Right cardiac atrium (tissue), 5 donors: ENCODE measurements at regions of chr4 and their contacts with region 1.

Region 1: DNA sequence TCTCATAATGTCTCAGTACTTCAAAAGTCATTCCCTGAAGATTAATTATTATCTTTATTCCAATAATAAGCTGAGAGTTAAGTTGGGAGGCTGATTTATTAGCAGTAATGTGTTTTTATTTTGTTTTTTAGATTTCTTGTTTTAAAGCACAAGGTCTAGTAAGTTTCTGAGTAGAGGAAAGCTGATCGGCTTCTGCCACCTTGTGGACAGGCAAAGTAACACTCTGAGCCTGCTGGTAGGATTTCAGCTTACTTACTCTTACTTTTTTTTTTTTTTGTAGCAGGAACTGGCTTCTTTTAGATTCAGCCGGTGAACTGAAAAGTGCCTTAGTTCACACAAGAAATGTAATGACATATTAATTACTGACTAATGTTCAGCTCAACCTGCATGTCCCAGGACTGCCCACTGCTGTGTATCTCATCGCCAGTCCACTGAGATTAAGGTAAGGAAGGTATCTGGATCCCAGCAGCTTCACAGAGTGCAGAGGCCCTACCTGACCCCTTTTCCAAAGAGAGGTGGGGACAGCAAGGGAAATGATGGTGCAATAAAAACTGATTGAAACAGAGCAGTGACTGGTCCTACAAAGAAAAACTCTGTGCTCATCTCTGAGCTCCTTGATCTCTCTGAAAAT is 126.5 kb downstream of the ADGRA3 start:
- DNase-seq: peak; percentile 25 to 64 (median 44)
- ATAC-seq: peak; percentile 33 to 55
- H3K4me3 ChIP-seq: no peak overlapping the region
- H3K27ac ChIP-seq: no peak overlapping the region
- H3K4me1 ChIP-seq: peaks cover 3% of the 10 kb centered on the region
- H3K27me3 ChIP-seq: no peaks in the 10 kb centered on the region

Region 2: DNA sequence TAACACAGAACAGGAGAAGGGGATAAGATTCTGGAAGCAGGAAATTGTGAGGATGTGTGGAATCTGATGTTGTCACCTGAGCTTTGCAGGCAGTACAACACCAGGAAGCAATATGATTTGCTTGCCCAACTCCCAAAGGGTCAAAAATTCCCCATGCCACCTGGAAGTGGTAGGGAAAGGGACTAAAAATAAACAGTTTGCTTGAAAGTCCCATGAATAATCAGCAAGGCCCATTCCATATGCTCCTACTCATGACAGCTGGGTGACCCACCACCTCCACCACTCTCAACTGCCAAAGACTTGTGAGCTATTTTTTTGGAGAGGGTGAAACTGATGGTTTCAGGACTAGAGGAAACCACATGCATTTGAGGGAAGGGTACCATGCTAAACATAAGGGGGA is 609.2 kb before region 1 on chr4:
- intact Hi-C with region 1: loop called in 3 of 4 experiments (anchors 5 to 10 kb)
- DNase-seq: no peak
- ATAC-seq: no peak
- H3K4me3 ChIP-seq: no peak overlapping the region
- H3K27ac ChIP-seq: no peak overlapping the region
- H3K4me1 ChIP-seq: no peaks in the 10 kb centered on the region
- H3K27me3 ChIP-seq: no peaks in the 10 kb centered on the region

Region 3: GRCh38 chr4:21790438-21791029 is 598.8 kb before region 1 on chr4:
- intact Hi-C with region 1: loop called in 3 of 4 experiments (anchors 5 to 10 kb)
- DNase-seq: no peak
- ATAC-seq: no peak
- H3K4me3 ChIP-seq: no peak overlapping the region
- H3K27ac ChIP-seq: no peak overlapping the region
- H3K4me1 ChIP-seq: no peaks in the 10 kb centered on the region
- H3K27me3 ChIP-seq: no peaks in the 10 kb centered on the region